Left cardiac atrium (tissue), 4 donors: ENCODE measurements at regions of chr2 and their contacts with region 1.

Region 1: GRCh38 chr2:217510771-217511291 is 492.0 kb downstream of the TNS1 start:
- DNase-seq: peak; percentile 66
- ATAC-seq: peak; percentile 86 to 96

Region 2: GRCh38 chr2:216683846-216684507 is 826.9 kb before region 1 on chr2:
- intact Hi-C with region 1: loop called (anchors 5 kb)
- DNase-seq: peak; percentile 74
- ATAC-seq: peak; percentile 69 to 82

Region 3: DNA sequence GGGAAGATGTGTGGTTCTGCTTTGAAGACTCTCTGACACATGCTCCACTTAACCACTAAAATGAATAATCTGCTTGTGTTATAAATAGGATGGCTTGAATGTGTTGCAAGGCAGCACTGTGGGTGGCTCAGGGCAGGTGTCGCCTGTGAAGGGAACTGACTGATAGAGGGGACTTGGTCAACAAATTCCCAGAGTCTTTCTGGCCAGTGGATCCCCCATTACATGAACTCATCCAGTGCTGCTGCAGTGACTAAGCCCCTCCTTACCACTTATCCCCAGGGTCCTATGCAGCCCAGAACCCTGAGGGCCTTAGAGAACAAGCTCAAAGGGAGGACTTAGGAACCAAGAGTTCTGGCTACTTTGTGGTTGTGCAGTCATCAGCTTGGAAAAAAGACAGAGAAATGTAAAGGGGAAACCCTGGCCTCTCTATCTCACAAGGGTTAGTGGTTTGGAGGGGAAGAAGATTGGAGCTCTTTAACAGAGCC is 424.8 kb before region 1 on chr2:
- intact Hi-C with region 1: no loop called
- DNase-seq: no peak
- ATAC-seq: peak in 1 of 2 donors; percentile 76

Region 4: DNA sequence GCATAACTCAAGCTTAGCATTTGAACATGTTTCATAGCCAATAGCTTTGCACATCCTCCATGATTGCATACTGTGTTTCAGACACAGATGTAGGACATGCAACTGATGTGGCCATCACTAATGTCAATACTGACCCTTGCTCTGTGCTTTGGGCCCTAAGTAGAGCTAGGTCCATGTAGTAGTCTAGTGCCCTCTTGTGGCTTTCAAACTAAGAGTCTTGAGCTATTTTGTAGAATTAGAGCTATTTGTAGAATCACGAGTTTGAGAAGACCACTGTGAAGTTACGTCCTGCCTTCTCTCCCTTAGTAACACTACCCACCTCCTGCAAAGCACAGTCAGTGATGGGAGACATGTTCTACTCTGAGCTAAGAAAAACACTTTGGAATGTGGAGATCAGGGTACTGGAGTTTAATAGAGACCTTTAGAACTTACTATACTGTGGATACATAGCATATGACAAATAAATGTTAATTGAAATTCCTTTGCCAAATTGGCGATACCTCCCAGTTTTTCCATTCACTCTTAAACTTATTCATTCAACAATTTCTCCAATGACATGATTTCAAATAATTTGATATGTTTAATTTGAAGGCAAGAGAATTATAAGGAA is 344.5 kb before region 1 on chr2:
- intact Hi-C with region 1: loop called in 1 of 2 experiments (anchors 10 kb)
- DNase-seq: no peak
- ATAC-seq: peak; percentile 61 to 71

Region 5: DNA sequence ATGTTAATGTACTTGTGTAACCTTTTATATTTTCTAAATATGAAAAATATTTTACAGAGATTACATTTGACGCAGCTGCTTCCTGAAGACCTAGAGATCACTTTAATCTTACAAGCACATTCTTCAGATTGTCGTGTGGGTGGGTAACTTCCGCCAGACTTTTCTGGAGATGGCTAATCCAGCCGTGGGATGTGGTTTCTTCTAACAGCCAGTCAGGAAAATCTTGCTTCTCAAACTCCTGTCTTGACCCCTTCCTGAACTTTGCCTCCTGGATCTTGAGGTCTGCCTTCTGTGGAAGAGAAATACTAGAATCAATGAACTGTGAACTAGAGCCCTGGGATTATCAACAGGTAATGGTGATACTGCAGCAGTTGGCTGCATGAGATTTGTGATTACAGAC is 249.4 kb before region 1 on chr2:
- intact Hi-C with region 1: no loop called
- DNase-seq: no peak
- ATAC-seq: no peak

Region 6: GRCh38 chr2:217713395-217714286 is 202.8 kb after region 1 on chr2:
- intact Hi-C with region 1: loop called (anchors 5 to 10 kb)
- DNase-seq: peak; percentile 76
- ATAC-seq: peak; percentile 82 to 84

Region 7: GRCh38 chr2:217725409-217725808 is 214.6 kb after region 1 on chr2:
- intact Hi-C with region 1: no loop called
- DNase-seq: no peak
- ATAC-seq: no peak